H1 (cell line): ENCODE measurements at regions of chr6 and their contacts with region 1.

Region 1: DNA sequence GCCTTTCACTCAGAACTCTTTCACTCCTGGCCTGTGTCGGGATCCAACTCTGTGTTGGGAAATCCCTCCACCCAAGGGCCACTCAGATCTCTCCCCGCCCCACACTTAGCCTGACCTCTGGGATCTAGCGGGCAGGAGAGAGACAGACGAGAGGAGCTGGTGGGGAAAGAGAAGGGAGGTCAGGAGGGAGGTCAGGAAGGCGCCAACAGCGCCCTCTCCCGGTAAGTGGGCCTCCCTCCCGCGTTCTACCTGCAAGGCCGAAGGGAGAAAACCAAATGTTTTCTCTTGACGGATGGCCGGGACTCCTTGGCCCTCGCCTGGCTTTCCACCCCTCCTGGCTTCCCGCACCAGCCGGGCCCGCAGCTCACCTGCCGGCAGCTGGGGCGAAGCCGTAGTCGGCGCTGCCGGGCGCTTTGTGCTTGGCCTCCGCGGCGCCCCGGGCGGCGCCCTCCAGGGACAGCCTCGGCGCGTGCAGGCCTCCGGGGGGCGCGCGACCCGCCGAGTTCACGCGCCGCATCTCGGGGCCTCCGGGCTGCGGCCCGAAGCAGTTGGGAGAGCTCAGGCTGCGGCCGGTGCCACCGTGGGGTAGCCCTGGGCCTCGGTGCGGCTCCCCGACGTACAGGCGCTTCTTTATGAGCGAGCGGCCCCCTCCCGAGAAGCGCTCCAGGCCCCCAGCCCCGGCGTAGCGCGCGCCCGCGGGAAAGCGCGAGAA is 38.2 kb downstream of the C6orf132 start:
- DNase-seq: peak; percentile 51 to 93
- H3K4me3 ChIP-seq: peak overlapping the region; percentile 3 to 57 (median 32); a peak in 6 of 8 replicates
- H3K27ac ChIP-seq: no peak overlapping the region
- H3K4me1 ChIP-seq: peaks cover 1 to 9% (median 4%) of the 10 kb centered on the region in 4 experiments; a peak in 6 of 7 replicates
- H3K27me3 ChIP-seq: no peaks in the 10 kb centered on the region; a peak in 2 of 7 replicates
- CTCF ChIP-seq: peak in 2 of 3 experiments; percentile 70 to 89; a peak in 3 of 4 replicates
- EP300 ChIP-seq: no peak
- POLR2A ChIP-seq: no peak
- RAD21 ChIP-seq: peak; percentile 52 to 58

Region 2: GRCh38 chr6:42075159-42075838 is 29.0 kb before region 1 on chr6:
- CTCF ChIA-PET with region 1: interaction called, 313 read pairs
- POLR2A ChIA-PET with region 1: no interaction called
- DNase-seq: peak in 1 of 2 experiments; percentile 90
- H3K4me3 ChIP-seq: no peak overlapping the region
- H3K27ac ChIP-seq: no peak overlapping the region
- H3K4me1 ChIP-seq: no peaks in the 10 kb centered on the region
- H3K27me3 ChIP-seq: no peaks in the 10 kb centered on the region
- CTCF ChIP-seq: peak; percentile 81 to 90 (median 83)
- EP300 ChIP-seq: no peak
- POLR2A ChIP-seq: no peak
- RAD21 ChIP-seq: peak; percentile 88 to 91

Region 3: DNA sequence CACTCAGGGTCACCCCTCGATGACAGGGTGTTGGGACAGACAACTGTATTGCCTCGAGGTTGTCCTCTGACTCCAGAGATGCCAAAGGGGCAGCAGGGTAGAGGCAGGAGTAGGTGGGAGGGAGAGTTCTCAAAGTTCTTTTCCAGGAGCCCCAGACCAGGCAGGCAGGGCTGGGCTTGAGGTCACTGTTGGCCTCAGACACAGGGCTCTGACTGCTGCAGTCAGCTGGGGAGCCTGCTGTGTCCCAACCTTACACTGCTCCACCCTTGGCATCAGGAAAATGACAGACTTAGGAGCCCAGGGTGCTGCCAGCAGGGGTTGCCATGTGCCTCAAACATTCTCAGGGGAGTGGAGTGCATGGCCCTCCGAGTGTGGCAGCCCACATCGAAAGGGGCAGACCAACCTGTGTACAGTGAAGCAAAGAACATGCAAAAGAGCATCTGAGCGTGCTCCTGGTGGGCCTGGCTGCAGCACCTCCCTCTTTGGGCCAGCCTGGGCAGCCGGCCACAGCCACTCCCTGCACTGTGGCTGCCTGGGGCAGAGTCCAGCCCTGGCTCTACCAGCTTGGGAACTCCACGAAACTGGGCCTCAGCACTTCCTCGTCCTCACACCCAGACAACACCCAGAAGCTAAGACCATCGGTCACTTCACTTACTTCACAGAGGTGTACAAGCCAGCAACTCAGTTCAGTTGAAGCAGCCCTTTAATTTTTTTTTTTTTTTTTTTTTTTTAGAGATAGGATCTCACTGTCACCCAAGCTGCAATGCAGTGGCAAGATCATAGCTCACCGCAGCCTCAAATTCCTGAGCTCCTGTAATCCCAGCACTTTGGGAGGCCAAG is 14.1 kb after region 1 on chr6:
- CTCF ChIA-PET with region 1: interaction called, 22 read pairs
- POLR2A ChIA-PET with region 1: interaction called, 25 read pairs
- DNase-seq: no peak
- H3K4me3 ChIP-seq: no peak overlapping the region
- H3K27ac ChIP-seq: no peak overlapping the region
- H3K4me1 ChIP-seq: no peaks in the 10 kb centered on the region; a peak in 1 of 7 replicates
- H3K27me3 ChIP-seq: no peaks in the 10 kb centered on the region
- CTCF ChIP-seq: no peak
- EP300 ChIP-seq: no peak
- POLR2A ChIP-seq: peak in 1 of 2 experiments; percentile 31; a peak in 1 of 3 replicates
- RAD21 ChIP-seq: no peak

Region 4: GRCh38 chr6:42136508-42137193 is 32.4 kb after region 1 on chr6:
- CTCF ChIA-PET with region 1: interaction called, 19 read pairs
- POLR2A ChIA-PET with region 1: interaction called, 50 read pairs
- DNase-seq: peak; percentile 86 to 92
- H3K4me3 ChIP-seq: peak overlapping the region in 3 of 4 experiments; percentile 6 to 44 (median 8); a peak in 4 of 8 replicates
- H3K27ac ChIP-seq: peak overlapping the region; percentile 88; the same call in 1 of the 2 replicates
- H3K4me1 ChIP-seq: peaks cover 28 to 65% (median 47%) of the 10 kb centered on the region in 4 experiments
- H3K27me3 ChIP-seq: no peaks in the 10 kb centered on the region
- CTCF ChIP-seq: peak in 2 of 3 experiments; percentile 38 to 61; a peak in 3 of 4 replicates
- EP300 ChIP-seq: peak in 1 of 2 experiments; percentile 90; a peak in 1 of 3 replicates
- POLR2A ChIP-seq: peak in 1 of 2 experiments; percentile 39; a peak in 1 of 3 replicates
- RAD21 ChIP-seq: peak; percentile 12 to 33; a peak in 3 of 4 replicates

Region 5: DNA sequence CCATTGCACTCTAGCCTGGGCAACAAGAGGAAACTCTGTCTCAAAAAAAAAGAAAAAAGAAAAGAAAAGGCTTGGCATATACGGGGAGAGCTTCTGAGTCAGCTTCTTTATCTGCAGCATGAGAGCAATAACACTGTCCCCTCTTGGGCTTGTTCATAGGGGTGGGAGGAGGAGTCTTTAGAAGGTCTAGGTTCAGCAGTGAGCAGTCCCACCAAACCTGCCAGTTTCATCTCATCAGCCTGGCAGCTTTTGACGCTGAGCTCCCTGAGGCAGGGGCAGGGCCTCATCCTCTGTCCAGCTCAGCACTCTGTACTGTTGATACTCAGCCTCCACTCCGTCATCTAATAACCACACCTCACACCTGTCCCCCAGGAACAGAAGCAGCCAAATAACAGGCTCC is 43.8 kb after region 1 on chr6:
- CTCF ChIA-PET with region 1: interaction called, 22 read pairs
- POLR2A ChIA-PET with region 1: interaction called, 6 read pairs
- DNase-seq: no peak
- H3K4me3 ChIP-seq: no peak overlapping the region
- H3K27ac ChIP-seq: no peak overlapping the region
- H3K4me1 ChIP-seq: peaks cover 0 to 7% (median 3%) of the 10 kb centered on the region in 4 experiments; a peak in 4 of 7 replicates
- H3K27me3 ChIP-seq: no peaks in the 10 kb centered on the region
- CTCF ChIP-seq: no peak
- EP300 ChIP-seq: no peak
- POLR2A ChIP-seq: no peak
- RAD21 ChIP-seq: no peak

Region 6: DNA sequence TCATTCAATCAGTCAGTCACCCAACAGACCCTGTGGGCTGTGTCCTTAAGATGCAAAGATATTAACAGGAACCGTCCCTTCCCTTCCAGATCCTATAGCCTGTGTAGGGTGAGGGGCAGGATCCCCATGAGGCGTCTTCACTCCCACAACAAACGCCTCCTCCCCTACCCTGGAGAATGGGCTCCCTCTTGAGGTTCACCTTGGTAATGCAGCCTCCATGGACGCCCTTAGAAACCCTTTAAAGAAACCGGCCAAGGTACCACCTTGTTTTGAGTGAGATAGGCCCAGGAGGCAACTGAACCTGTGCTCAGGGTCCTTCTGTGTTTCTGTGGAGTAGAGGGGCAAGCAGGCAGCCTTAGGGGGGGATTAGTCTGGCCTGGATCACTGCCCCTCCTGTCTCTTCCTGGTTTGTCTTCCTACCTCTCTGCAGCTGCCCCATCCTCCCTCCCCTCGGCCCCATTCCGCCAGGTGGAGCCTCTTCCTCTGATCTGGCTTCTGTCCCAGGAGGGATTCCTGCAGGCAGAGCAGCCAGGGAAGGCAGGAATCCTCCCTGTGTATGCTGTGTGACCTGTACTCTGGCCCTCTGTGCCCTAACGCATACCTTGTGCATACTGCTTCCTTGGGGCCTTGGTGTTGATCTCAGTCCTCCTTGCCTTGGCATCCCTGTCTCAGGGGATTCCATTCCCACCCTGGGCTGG is 62.3 kb after region 1 on chr6:
- CTCF ChIA-PET with region 1: interaction called, 224 read pairs
- POLR2A ChIA-PET with region 1: interaction called, 11 read pairs
- DNase-seq: peak; percentile 77 to 97
- H3K4me3 ChIP-seq: no peak overlapping the region
- H3K27ac ChIP-seq: peak overlapping the region; percentile 48
- H3K4me1 ChIP-seq: peaks cover 7 to 22% (median 11%) of the 10 kb centered on the region in 4 experiments
- H3K27me3 ChIP-seq: no peaks in the 10 kb centered on the region; a peak in 1 of 7 replicates
- CTCF ChIP-seq: peak; percentile 80 to 93 (median 89)
- EP300 ChIP-seq: no peak
- POLR2A ChIP-seq: no peak
- RAD21 ChIP-seq: peak; percentile 91 to 93

Region 7: GRCh38 chr6:42217519-42218367 is 113.5 kb after region 1 on chr6 and contains the start of gene MRPS10:
- CTCF ChIA-PET with region 1: interaction called, 20 read pairs
- POLR2A ChIA-PET with region 1: interaction called, 5 read pairs
- DNase-seq: peak; percentile 78 to 87
- H3K4me3 ChIP-seq: peak within 1 kb of the TSS; percentile 93 to 97 (median 94)
- H3K27ac ChIP-seq: peak within 1 kb of the TSS; percentile 52
- H3K4me1 ChIP-seq: no peaks in the 10 kb centered on the region; a peak in 1 of 7 replicates
- H3K27me3 ChIP-seq: no peaks in the 10 kb centered on the region
- CTCF ChIP-seq: no peak
- EP300 ChIP-seq: no peak
- POLR2A ChIP-seq: peak; percentile 68 to 94
- RAD21 ChIP-seq: 0 out of 4 replicates have a peak, but pooled peaks of 1 of the 2 experiments have one; percentile 2
- total RNA-seq, gene MRPS10: 32.0 and 33.6 TPM in 2 replicates